IMR-90 (cell line): ENCODE measurements at regions of chr10 and their contacts with region 1.

Region 1: DNA sequence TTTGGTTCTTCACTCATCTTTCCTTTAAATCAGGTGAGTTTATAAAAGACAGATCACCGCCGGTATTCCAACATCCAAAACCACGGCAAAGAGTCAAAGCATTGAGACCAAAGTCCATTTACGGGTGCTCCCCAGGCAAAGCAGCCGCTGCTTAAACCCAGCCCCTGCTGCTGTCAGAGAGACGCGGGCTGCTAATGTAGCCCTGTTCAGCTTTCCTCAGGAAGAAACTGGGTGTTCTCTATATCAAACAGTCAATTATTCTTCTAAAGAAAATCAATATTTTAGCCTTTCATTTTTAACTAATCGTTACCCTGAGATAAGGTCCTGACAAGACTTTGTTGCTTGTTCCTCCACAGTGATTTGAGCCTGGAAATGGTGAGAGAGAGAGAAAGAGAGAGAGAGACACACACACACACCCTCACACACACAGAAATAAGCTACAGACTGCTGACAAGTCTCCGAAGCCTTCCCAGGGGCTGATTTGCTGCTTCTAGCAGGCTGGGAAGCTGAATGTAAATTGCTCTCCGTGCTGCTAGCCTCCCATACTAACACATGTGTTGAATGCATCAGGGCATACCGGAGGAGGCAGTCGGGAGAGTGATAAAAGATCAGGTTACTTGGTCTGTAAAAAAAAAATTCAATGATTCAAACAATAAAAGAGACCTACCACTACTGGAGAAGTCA is 183.0 kb upstream of the ANK3 start:
- DNase-seq: peak; percentile 67
- ATAC-seq: peak; percentile 88
- H3K4me3 ChIP-seq: peak overlapping the region; percentile 36; the same call in 1 of the 2 replicates
- H3K27ac ChIP-seq: no peak overlapping the region
- H3K4me1 ChIP-seq: no peaks in the 10 kb centered on the region
- H3K27me3 ChIP-seq: no peaks in the 10 kb centered on the region
- CTCF ChIP-seq: no peak
- POLR2A ChIP-seq: no peak
- RAD21 ChIP-seq: no peak

Region 2: DNA sequence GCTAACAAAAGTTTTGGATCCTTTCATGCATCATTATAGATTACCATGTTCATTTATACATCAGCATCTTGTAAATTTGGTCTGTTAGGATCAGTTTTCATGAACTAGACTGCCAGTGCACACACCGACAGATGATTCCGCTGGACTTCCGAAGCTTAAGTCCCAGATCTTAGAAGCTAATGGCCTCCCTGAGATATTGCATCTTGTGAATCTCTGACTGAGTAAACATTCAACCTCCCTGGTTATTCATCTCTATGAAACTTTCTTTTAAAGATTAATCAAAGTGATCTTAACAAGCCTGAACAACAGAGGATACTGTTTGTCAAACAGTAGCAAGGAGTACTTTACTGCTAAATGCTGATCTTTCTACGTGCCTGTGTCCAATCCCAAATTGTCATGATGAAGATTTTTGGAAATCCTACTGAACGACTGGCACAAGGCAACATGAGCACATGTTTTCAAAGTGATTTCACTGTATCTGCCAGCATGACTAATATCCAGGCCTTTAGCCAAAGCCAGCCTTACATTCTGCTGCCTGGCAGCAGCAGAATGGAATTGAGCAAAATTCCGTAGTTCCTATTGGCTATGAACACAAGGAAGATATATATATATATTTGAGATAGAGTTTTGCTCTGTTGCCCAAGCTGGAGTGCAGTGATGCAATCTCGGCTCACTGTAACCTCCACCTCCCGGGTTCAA is 91.6 kb before region 1 on chr10:
- CTCF ChIA-PET with region 1: no interaction called
- POLR2A ChIA-PET with region 1: no interaction called
- dilution Hi-C with region 1: no loop called
- in situ Hi-C with region 1: no loop called
- intact Hi-C with region 1: loop called (anchors 2 kb)
- DNase-seq: peak; percentile 76
- ATAC-seq: peak; percentile 74
- H3K4me3 ChIP-seq: no peak overlapping the region
- H3K27ac ChIP-seq: no peak overlapping the region
- H3K4me1 ChIP-seq: no peaks in the 10 kb centered on the region
- H3K27me3 ChIP-seq: peaks cover 2% of the 10 kb centered on the region; the same call in 1 of the 2 replicates
- CTCF ChIP-seq: no peak
- POLR2A ChIP-seq: no peak
- RAD21 ChIP-seq: no peak

Region 3: GRCh38 chr10:60555700-60556099 is 17.0 kb before region 1 on chr10:
- CTCF ChIA-PET with region 1: no interaction called
- POLR2A ChIA-PET with region 1: no interaction called
- dilution Hi-C with region 1: no loop called
- in situ Hi-C with region 1: no loop called
- intact Hi-C with region 1: no loop called
- DNase-seq: no peak
- ATAC-seq: no peak
- H3K4me3 ChIP-seq: no peak overlapping the region
- H3K27ac ChIP-seq: no peak overlapping the region
- H3K4me1 ChIP-seq: no peaks in the 10 kb centered on the region
- H3K27me3 ChIP-seq: no peaks in the 10 kb centered on the region
- CTCF ChIP-seq: no peak
- POLR2A ChIP-seq: no peak
- RAD21 ChIP-seq: no peak

Region 4: GRCh38 chr10:60597513-60597912 is 24.9 kb after region 1 on chr10:
- CTCF ChIA-PET with region 1: no interaction called
- POLR2A ChIA-PET with region 1: no interaction called
- dilution Hi-C with region 1: no loop called
- in situ Hi-C with region 1: no loop called
- intact Hi-C with region 1: loop called (anchors 2 kb)
- DNase-seq: no peak
- ATAC-seq: no peak
- H3K4me3 ChIP-seq: no peak overlapping the region
- H3K27ac ChIP-seq: no peak overlapping the region
- H3K4me1 ChIP-seq: no peaks in the 10 kb centered on the region
- H3K27me3 ChIP-seq: no peaks in the 10 kb centered on the region; the same call in 1 of the 2 replicates
- CTCF ChIP-seq: no peak
- POLR2A ChIP-seq: no peak
- RAD21 ChIP-seq: no peak